AG04449 (cell line): ENCODE measurements at regions of chr13 and their contacts with region 1.

Region 1: GRCh38 chr13:26707122-26708006 is 53.2 kb downstream of the GPR12 start:
- DNase-seq: no peak
- H3K4me3 ChIP-seq: no peak overlapping the region
- CTCF ChIP-seq: peak; percentile 67

Region 2: GRCh38 chr13:26813321-26813979 is 106.1 kb after region 1 on chr13:
- CTCF ChIA-PET with region 1: no interaction called
- POLR2A ChIA-PET with region 1: no interaction called
- DNase-seq: no peak
- H3K4me3 ChIP-seq: no peak overlapping the region
- CTCF ChIP-seq: no peak

Region 3: GRCh38 chr13:26872525-26873385 is 165.4 kb after region 1 on chr13:
- CTCF ChIA-PET with region 1: interaction called, 19 read pairs
- POLR2A ChIA-PET with region 1: no interaction called
- DNase-seq: no peak
- H3K4me3 ChIP-seq: no peak overlapping the region
- CTCF ChIP-seq: peak; percentile 83